WTC11 (cell line): ENCODE measurements at regions of chr14 and their contacts with region 1.

Region 1: DNA sequence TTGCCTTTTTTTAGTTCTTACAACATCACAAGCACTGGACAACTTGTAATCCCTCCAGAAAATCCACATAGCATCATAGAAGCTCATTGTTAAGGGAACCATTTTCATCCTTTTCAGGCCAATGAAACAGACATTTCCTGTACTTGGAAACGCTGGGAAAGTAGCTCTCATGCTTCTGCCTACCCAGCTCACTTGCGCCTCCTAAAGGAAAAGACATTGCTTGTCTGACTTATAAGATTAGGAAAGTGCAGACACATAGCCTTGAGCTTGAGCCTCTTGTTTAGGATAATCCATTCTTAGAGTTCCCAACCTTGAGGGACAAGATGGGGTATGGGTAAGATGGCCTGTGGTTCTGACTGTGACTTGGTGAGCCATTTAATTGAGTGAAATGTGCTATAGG is 589.5 kb downstream of the NOVA1 start:
- DNase-seq: peak; percentile 22
- ATAC-seq: peak; percentile 90
- H3K4me3 Mint-ChIP-seq: no peak overlapping the region
- H3K27ac Mint-ChIP-seq: no peak overlapping the region
- H3K4me1 Mint-ChIP-seq: 0 out of 2 replicates have a peak, but pooled peaks cover 4% of the 10 kb centered on the region
- H3K27me3 Mint-ChIP-seq: no peaks in the 10 kb centered on the region
- CTCF ChIP-seq: peak; percentile 46; the same call in 1 of the 2 replicates

Region 2: DNA sequence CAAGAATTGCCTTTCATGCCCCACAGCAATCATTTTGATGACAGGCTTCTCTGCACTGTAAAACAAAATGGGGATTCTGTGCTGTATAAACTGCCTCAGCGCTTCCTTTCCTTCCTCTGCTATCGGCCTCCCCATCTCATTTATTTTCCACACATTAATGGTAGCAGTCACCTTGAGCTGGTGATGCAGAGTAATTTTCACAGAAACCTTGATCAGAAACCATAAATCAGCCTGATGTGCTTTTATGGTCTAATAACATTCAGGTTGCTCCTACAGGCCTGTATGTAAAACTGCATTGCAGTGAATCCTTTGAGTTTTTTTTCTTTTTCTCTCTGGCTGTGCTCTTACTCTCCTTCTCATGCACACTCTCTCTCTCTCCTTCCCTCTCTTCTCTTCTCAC is 379.9 kb before region 1 on chr14:
- CTCF ChIA-PET with region 1: no interaction called
- POLR2A ChIA-PET with region 1: no interaction called
- DNase-seq: no peak
- ATAC-seq: no peak
- H3K4me3 Mint-ChIP-seq: no peak overlapping the region
- H3K27ac Mint-ChIP-seq: no peak overlapping the region
- H3K4me1 Mint-ChIP-seq: 0 out of 2 replicates have a peak, but pooled peaks cover 3% of the 10 kb centered on the region
- H3K27me3 Mint-ChIP-seq: no peaks in the 10 kb centered on the region
- CTCF ChIP-seq: no peak

Region 3: DNA sequence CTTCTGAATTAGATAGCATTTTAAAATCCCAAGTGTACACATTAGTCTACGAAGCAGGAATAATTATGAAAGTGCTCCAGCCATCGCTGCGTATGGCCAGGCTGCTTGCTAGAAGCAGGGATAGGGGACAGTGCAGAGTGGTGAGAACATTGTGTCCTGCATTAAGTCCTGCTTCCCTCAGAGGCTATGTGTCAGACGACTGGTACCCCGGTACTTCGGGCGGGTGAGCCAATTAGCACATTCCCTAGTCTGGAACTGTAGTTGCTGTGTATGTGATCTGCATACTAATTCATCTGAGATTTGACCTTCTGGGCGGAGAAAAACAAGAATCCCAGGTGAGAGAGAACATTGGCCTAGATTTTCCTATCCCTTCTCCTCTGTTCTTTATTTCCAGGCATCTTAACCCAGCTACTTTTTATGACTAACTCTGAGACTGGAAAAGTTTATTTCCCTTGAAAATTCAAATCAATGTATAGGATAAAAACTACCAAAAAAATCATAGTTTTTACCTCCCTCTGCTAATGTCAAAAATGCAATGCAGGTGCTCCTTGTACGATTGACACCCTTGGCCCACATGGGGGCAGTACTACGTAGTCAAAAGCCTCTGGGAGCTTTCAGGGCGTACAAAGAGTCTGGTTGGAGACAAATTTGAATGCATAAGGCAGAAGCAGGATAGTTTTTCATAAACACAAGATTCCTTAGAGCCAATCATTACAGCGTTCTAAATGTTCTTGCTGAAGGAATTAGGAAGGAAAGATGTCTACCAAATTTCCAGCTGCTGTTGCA is 174.8 kb before region 1 on chr14:
- CTCF ChIA-PET with region 1: interaction called, 22 read pairs
- POLR2A ChIA-PET with region 1: no interaction called
- DNase-seq: peak; percentile 57
- ATAC-seq: peak; percentile 82
- H3K4me3 Mint-ChIP-seq: no peak overlapping the region
- H3K27ac Mint-ChIP-seq: no peak overlapping the region
- H3K4me1 Mint-ChIP-seq: peaks cover 14% of the 10 kb centered on the region
- H3K27me3 Mint-ChIP-seq: peaks cover 5% of the 10 kb centered on the region
- CTCF ChIP-seq: peak; percentile 48; the same call in 1 of the 2 replicates

Region 4: DNA sequence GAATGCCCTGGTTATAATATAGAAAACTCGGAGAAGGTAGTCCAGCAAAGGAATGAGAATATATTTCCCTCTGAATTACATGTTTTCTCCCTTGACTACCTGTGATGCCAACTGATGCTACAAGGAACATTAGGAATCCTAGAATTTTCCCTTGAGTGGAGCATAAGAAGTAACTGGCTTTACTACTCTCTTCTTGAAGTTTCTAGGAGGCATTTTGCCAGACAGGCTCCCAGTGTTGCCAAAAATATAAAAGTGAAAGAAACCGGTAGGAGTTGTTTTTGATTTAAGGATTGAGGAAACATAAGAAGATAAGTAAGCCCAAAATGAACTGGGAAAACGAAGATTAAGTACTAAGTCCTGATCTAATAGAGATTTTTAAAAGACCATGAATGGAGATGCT is 103.8 kb before region 1 on chr14:
- CTCF ChIA-PET with region 1: no interaction called
- POLR2A ChIA-PET with region 1: no interaction called
- DNase-seq: no peak
- ATAC-seq: no peak
- H3K4me3 Mint-ChIP-seq: no peak overlapping the region
- H3K27ac Mint-ChIP-seq: no peak overlapping the region
- H3K4me1 Mint-ChIP-seq: no peaks in the 10 kb centered on the region
- H3K27me3 Mint-ChIP-seq: no peaks in the 10 kb centered on the region
- CTCF ChIP-seq: no peak

Region 5: GRCh38 chr14:25993830-25994229 is 14.5 kb before region 1 on chr14:
- CTCF ChIA-PET with region 1: interaction called, 13 read pairs
- POLR2A ChIA-PET with region 1: no interaction called
- DNase-seq: no peak
- ATAC-seq: peak; percentile 65; the same call in 1 of the 2 replicates
- H3K4me3 Mint-ChIP-seq: no peak overlapping the region
- H3K27ac Mint-ChIP-seq: no peak overlapping the region
- H3K4me1 Mint-ChIP-seq: peaks cover 7% of the 10 kb centered on the region
- H3K27me3 Mint-ChIP-seq: no peaks in the 10 kb centered on the region
- CTCF ChIP-seq: no peak

Region 6: DNA sequence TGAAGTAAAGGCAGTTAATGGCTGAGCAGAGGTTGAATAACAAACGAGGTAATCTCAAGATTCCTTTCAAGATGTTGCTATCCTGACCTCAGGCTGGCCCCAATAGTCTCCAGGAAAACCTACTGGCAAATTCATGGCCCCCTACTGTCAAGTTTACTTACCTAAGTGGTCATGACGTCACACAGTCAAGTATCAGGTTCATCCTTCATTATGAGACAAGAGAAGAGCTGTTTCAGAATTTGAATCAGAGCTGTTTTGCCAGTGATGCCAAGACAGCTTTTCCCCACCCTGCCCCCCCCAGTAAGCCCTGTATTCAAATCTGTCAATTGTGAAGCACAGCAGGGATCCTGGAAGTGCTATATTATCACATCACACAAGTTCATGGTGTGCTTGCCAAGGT is 80.0 kb after region 1 on chr14:
- CTCF ChIA-PET with region 1: no interaction called
- POLR2A ChIA-PET with region 1: no interaction called
- DNase-seq: peak; percentile 14
- ATAC-seq: peak; percentile 90
- H3K4me3 Mint-ChIP-seq: no peak overlapping the region
- H3K27ac Mint-ChIP-seq: no peak overlapping the region
- H3K4me1 Mint-ChIP-seq: peaks cover 25% of the 10 kb centered on the region
- H3K27me3 Mint-ChIP-seq: peaks cover 82% of the 10 kb centered on the region
- CTCF ChIP-seq: no peak